MCF 10A (cell line): ENCODE measurements at regions of chr3 and their contacts with region 1.

Region 1: DNA sequence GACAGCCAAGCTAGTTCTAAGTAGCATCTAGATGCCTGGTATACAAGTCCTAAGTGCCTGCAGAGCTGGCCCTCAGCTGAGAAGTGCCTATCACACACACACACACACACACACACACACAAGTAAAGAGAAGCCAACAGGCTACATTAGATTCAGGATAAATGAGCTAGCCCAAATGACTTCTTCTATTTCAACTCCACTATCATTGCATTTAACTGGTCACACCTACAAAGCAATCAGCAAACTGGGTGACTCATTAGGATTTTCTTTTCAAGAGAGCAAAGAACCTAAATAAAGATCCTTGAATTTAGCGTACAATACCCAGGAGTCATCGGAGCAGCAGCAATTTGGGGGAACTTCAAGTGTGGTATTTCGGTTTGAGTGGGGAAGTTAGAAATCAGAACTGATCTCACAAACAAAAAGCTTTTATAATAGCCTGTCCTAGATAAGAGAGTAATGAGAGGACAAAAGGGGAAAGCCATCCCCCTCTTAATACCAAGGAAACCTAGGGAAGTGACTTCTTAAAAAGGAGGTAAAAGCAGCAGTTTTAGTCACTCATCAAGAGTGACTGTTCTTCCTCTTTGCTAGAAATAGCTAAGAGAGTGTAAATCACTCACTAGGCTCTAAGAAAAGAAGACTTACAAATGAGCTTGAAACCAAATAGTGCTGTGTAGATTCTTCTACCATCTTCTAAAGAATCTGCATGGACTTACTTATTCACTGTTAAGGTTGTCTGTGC is 112.7 kb downstream of the TNIK start:
- DNase-seq: peak; percentile 45
- H3K4me3 Mint-ChIP-seq: peak overlapping the region; percentile 16
- H3K27ac Mint-ChIP-seq: peak overlapping the region; percentile 1
- H3K4me1 Mint-ChIP-seq: peaks cover 40% of the 10 kb centered on the region
- H3K27me3 Mint-ChIP-seq: no peaks in the 10 kb centered on the region
- CTCF ChIP-seq: no peak

Region 2: DNA sequence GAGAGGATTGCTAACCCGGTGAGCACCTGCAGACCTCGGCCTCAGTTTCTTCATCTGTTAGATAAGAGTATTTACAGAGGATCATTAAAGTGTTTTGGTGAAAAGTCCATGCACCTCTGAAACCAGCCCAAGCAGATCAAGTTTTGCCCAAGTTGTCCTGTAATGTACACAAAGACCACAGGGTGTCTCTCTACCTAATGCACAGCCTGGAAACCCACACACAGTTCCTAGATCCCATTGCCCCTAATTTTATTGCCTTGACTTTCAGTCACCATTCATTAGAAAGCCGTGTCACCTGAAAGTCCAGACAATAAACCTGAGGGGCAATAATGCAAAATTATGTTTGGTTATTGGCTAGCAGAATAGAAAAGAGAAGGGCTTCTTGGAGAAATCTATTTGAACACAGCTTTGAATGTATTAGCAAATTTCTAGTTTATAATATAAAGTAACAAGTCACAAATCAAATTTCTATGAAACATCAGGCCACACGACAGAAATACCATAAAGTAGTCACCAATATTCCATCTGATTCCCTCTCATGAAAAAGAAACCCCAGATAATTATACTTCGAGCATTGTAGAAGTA is 159.7 kb before region 1 on chr3:
- CTCF ChIA-PET with region 1: interaction called, 4 read pairs
- POLR2A ChIA-PET with region 1: no interaction called
- intact Hi-C with region 1: loop called (anchors 10 kb)
- DNase-seq: peak; percentile 60
- H3K4me3 Mint-ChIP-seq: no peak overlapping the region
- H3K27ac Mint-ChIP-seq: no peak overlapping the region
- H3K4me1 Mint-ChIP-seq: peaks cover 22% of the 10 kb centered on the region
- H3K27me3 Mint-ChIP-seq: no peaks in the 10 kb centered on the region
- CTCF ChIP-seq: peak; percentile 70